ENCODE measurements at regions of chr5 and their contacts with region 1.

Region 1: GRCh38 chr5:148805326-148806290 is 20.8 kb upstream of the ADRB2 start:
- DNase-seq: peak; percentile 79
- ATAC-seq: peak; percentile 64
- H3K4me3 ChIP-seq: peak overlapping the region; percentile 12; the same call in 1 of the 2 replicates
- H3K27ac ChIP-seq: peak overlapping the region; percentile 79
- H3K4me1 ChIP-seq: peaks cover 58% of the 10 kb centered on the region
- H3K27me3 ChIP-seq: no peaks in the 10 kb centered on the region
- CTCF ChIP-seq: no peak
- EP300 ChIP-seq: peak in 1 of 2 experiments; percentile 60; a peak in 1 of 4 replicates
- POLR2A ChIP-seq: no peak
- RAD21 ChIP-seq: no peak

Region 2: GRCh38 chr5:148746826-148747535 is 58.6 kb before region 1 on chr5:
- CTCF ChIA-PET with region 1: interaction called, 13 read pairs
- POLR2A ChIA-PET with region 1: no interaction called
- RAD21 ChIA-PET with region 1: interaction called, 7 read pairs
- SMC1A ChIA-PET with region 1: interaction called, 8 read pairs
- in situ Hi-C with region 1: no loop called
- intact Hi-C with region 1: loop called (anchors 5 kb)
- DNase-seq: no peak
- ATAC-seq: peak; percentile 90
- H3K4me3 ChIP-seq: no peak overlapping the region
- H3K27ac ChIP-seq: no peak overlapping the region
- H3K4me1 ChIP-seq: peaks cover 9% of the 10 kb centered on the region
- H3K27me3 ChIP-seq: no peaks in the 10 kb centered on the region
- CTCF ChIP-seq: no peak
- EP300 ChIP-seq: no peak
- POLR2A ChIP-seq: no peak
- RAD21 ChIP-seq: no peak

Region 3: GRCh38 chr5:148791334-148791667 is 14.3 kb before region 1 on chr5:
- CTCF ChIA-PET with region 1: interaction called, 13 read pairs
- POLR2A ChIA-PET with region 1: interaction called, 4 read pairs
- RAD21 ChIA-PET with region 1: interaction called, 8 read pairs
- SMC1A ChIA-PET with region 1: interaction called, 38 read pairs
- in situ Hi-C with region 1: no loop called
- intact Hi-C with region 1: no loop called
- DNase-seq: peak; percentile 77
- ATAC-seq: peak; percentile 96
- H3K4me3 ChIP-seq: no peak overlapping the region
- H3K27ac ChIP-seq: no peak overlapping the region
- H3K4me1 ChIP-seq: peaks cover 37% of the 10 kb centered on the region
- H3K27me3 ChIP-seq: no peaks in the 10 kb centered on the region
- CTCF ChIP-seq: no peak
- EP300 ChIP-seq: peak; percentile 53 to 93; a peak in 2 of 4 replicates
- POLR2A ChIP-seq: no peak
- RAD21 ChIP-seq: 0 out of 2 replicates have a peak, but pooled peaks have one; percentile 6

Region 4: GRCh38 chr5:148820461-148821395 is 15.1 kb after region 1 on chr5:
- CTCF ChIA-PET with region 1: interaction called, 23 read pairs
- POLR2A ChIA-PET with region 1: no interaction called
- RAD21 ChIA-PET with region 1: interaction called, 4 read pairs
- SMC1A ChIA-PET with region 1: interaction called, 16 read pairs
- in situ Hi-C with region 1: no loop called
- intact Hi-C with region 1: no loop called
- DNase-seq: no peak
- ATAC-seq: peak; percentile 76
- H3K4me3 ChIP-seq: no peak overlapping the region
- H3K27ac ChIP-seq: no peak overlapping the region
- H3K4me1 ChIP-seq: peaks cover 5% of the 10 kb centered on the region
- H3K27me3 ChIP-seq: no peaks in the 10 kb centered on the region
- CTCF ChIP-seq: peak; percentile 49 to 59 (median 59); a peak in 5 of 6 replicates
- EP300 ChIP-seq: no peak
- POLR2A ChIP-seq: no peak
- RAD21 ChIP-seq: peak; percentile 41

Region 5: DNA sequence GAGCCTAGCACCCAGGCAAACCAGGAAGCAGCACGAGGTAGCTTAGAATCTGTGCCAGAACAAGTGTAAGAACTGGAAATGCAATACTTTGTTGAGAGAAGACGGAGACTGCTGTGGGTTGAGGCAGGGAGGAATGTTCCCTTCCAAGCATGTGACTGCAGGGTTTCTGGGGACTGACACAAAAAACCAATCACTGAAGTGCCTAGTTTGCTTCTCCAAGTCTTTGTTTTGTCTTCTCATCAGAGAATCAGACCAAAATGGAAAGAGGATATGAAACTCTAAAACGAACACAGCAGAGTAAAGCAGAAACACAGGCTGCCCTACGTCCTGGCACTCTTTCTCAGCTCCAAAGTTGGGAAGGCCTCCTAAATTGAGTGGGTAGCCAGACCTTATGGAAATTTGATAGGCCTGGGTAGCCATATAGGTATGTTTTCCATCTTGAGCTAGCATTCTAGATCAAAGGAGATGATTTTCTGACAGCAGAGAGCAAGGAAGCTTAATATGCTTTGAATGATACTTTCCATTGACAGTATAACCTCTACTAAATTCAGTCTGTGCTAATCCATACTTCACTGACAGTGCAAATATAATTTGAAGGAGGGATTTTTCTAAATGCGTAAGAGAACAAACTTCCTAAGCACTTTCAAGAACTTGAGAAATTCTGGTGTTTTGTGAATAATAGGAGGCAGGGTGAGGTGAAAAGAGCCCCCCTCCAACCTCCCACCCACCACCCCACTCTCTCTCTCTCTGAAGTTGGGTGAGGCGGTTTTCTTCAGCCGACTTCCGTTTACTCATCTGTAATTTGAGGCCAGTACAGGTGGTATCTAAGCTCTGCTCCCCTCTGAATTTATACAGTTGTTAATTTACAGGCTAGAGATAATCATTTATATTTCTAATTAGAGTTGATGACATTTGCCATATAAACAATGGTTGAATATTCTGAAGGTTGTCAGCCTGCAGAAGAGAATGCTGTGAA is 26.3 kb after region 1 on chr5:
- CTCF ChIA-PET with region 1: no interaction called
- POLR2A ChIA-PET with region 1: interaction called, 3 read pairs
- RAD21 ChIA-PET with region 1: no interaction called
- SMC1A ChIA-PET with region 1: interaction called, 10 read pairs
- in situ Hi-C with region 1: no loop called
- intact Hi-C with region 1: no loop called
- DNase-seq: peak; percentile 59
- ATAC-seq: peak; percentile 92
- H3K4me3 ChIP-seq: 0 out of 2 replicates have a peak overlapping the region, but pooled peaks have one; percentile 28
- H3K27ac ChIP-seq: peak overlapping the region; percentile 40
- H3K4me1 ChIP-seq: peaks cover 31% of the 10 kb centered on the region
- H3K27me3 ChIP-seq: no peaks in the 10 kb centered on the region; a peak in 1 of 4 replicates
- CTCF ChIP-seq: no peak
- EP300 ChIP-seq: peak in 1 of 2 experiments; percentile 76; a peak in 2 of 4 replicates
- POLR2A ChIP-seq: no peak
- RAD21 ChIP-seq: no peak

Region 6: GRCh38 chr5:148875205-148875875 is 69.7 kb after region 1 on chr5:
- CTCF ChIA-PET with region 1: no interaction called
- POLR2A ChIA-PET with region 1: no interaction called
- RAD21 ChIA-PET with region 1: no interaction called
- SMC1A ChIA-PET with region 1: no interaction called
- in situ Hi-C with region 1: no loop called
- intact Hi-C with region 1: no loop called
- DNase-seq: no peak
- ATAC-seq: no peak
- H3K4me3 ChIP-seq: no peak overlapping the region
- H3K27ac ChIP-seq: no peak overlapping the region
- H3K4me1 ChIP-seq: no peaks in the 10 kb centered on the region
- H3K27me3 ChIP-seq: no peaks in the 10 kb centered on the region
- CTCF ChIP-seq: no peak
- EP300 ChIP-seq: no peak
- POLR2A ChIP-seq: no peak
- RAD21 ChIP-seq: no peak

Region 7: DNA sequence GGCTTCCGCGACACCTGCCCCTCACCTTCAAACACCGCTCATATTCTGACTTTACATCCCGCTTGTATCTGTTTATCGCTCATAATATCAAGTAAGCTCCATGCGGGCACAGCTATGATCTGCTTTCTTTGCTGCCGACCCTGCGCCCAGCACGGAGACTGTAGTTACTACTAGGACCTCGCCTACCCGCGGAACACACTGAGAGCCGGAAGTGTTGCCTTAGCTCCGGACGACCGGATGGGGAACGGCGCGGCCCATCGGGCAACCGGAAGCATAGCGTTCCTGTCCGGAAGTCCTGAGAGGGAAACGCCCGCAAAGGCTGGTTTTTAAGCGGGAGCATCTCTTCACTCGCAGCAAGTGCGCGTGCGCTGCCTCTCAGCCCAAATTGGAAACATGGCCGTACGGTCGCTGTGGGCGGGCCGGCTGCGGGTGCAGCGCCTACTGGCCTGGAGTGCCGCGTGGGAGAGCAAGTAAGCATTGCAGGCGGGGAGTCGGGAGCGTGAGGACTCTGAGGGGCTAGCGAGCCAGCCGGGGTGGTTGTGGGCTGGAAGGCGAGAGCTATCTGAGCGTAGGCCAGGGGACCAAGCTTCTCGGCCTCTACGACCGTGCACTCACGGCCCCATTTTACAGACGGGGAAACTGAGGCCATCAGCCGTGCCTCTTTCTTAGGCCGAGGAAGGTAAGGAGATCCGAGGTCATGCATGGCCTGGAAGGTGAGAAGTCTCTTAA is 539.7 kb after region 1 on chr5 and contains the start of gene GRPEL2:
- CTCF ChIA-PET with region 1: no interaction called
- POLR2A ChIA-PET with region 1: no interaction called
- RAD21 ChIA-PET with region 1: no interaction called
- SMC1A ChIA-PET with region 1: no interaction called
- in situ Hi-C with region 1: no loop called
- intact Hi-C with region 1: loop called (anchors 10 kb)
- DNase-seq: peak; percentile 87
- ATAC-seq: peak; percentile 96
- H3K4me3 ChIP-seq: peak within 1 kb of the TSS; percentile 97
- H3K27ac ChIP-seq: peak within 1 kb of the TSS; percentile 84
- H3K4me1 ChIP-seq: no peaks in the 10 kb centered on the region
- H3K27me3 ChIP-seq: no peaks in the 10 kb centered on the region
- CTCF ChIP-seq: 0 out of 6 replicates have a peak, but pooled peaks of 1 of the 3 experiments have one; percentile 6
- EP300 ChIP-seq: no peak
- POLR2A ChIP-seq: peak; percentile 97
- RAD21 ChIP-seq: no peak
- polyA plus RNA-seq, gene GRPEL2: 4.4 to 7.6 TPM

Region 8: GRCh38 chr5:150409638-150410523 is 1604.3 kb after region 1 on chr5:
- CTCF ChIA-PET with region 1: no interaction called
- POLR2A ChIA-PET with region 1: no interaction called
- RAD21 ChIA-PET with region 1: no interaction called
- SMC1A ChIA-PET with region 1: no interaction called
- in situ Hi-C with region 1: no loop called
- intact Hi-C with region 1: loop called (anchors 10 kb)
- DNase-seq: peak; percentile 84
- ATAC-seq: peak; percentile 13
- H3K4me3 ChIP-seq: peak overlapping the region; percentile 99
- H3K27ac ChIP-seq: peak overlapping the region; percentile 100
- H3K4me1 ChIP-seq: peaks cover 32% of the 10 kb centered on the region
- H3K27me3 ChIP-seq: no peaks in the 10 kb centered on the region
- CTCF ChIP-seq: no peak
- EP300 ChIP-seq: no peak
- POLR2A ChIP-seq: peak; percentile 89
- RAD21 ChIP-seq: no peak

Measured in GM12878 (cell line).